Transverse colon (tissue), 4 donors: ENCODE measurements at regions of chr4 and their contacts with region 1.

Region 1: GRCh38 chr4:122758033-122758432 is 25.5 kb downstream of the BBS12 start:
- DNase-seq: peak; percentile 29
- H3K4me3 ChIP-seq: no peak overlapping the region
- H3K27ac ChIP-seq: peak overlapping the region in 3 of 4 donors; percentile 32 to 51 (median 33)
- H3K4me1 ChIP-seq: peaks cover 0 to 15% (median 5%) of the 10 kb centered on the region in 4 donors
- H3K27me3 ChIP-seq: no peaks in the 10 kb centered on the region
- CTCF ChIP-seq: peak; percentile 75 to 79 (median 76)
- EP300 ChIP-seq: no peak
- POLR2A ChIP-seq: no peak

Region 2: GRCh38 chr4:122803788-122804208 is 45.8 kb after region 1 on chr4:
- in situ Hi-C with region 1: no loop called
- intact Hi-C with region 1: no loop called
- DNase-seq: no peak
- H3K4me3 ChIP-seq: no peak overlapping the region
- H3K27ac ChIP-seq: no peak overlapping the region
- H3K4me1 ChIP-seq: peaks cover 0 to 2% (median 0%) of the 10 kb centered on the region in 4 donors
- H3K27me3 ChIP-seq: no peaks in the 10 kb centered on the region
- CTCF ChIP-seq: no peak
- EP300 ChIP-seq: no peak
- POLR2A ChIP-seq: no peak

Region 3: DNA sequence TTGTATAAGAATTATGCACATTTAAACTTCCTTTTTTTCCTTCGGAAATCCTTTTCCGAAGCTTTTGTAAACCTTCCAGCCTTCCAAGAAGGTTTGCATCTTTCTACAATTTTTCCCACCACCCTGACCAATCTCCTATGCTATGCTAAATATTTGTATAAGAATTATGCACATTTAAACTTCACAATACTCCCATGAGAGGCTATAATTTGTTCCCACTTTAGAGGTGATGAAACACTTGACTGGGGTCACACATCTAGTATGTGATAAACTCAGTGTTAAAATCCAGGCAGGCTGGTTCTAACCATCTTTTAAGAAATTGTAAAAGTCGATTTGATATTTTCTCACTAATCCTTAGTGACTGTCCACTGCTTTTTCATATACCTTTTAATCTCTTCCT is 142.3 kb after region 1 on chr4:
- in situ Hi-C with region 1: loop called in 2 of 4 experiments (anchors 10 to 25 kb)
- intact Hi-C with region 1: no loop called
- DNase-seq: no peak
- H3K4me3 ChIP-seq: no peak overlapping the region
- H3K27ac ChIP-seq: no peak overlapping the region
- H3K4me1 ChIP-seq: peaks cover 0 to 9% (median 2%) of the 10 kb centered on the region in 4 donors
- H3K27me3 ChIP-seq: no peaks in the 10 kb centered on the region
- CTCF ChIP-seq: no peak
- EP300 ChIP-seq: no peak
- POLR2A ChIP-seq: no peak

Region 4: GRCh38 chr4:122914938-122915337 is 156.9 kb after region 1 on chr4:
- in situ Hi-C with region 1: loop called (anchors 10 to 25 kb)
- intact Hi-C with region 1: loop called (anchors 5 kb)
- DNase-seq: no peak
- H3K4me3 ChIP-seq: no peak overlapping the region
- H3K27ac ChIP-seq: no peak overlapping the region
- H3K4me1 ChIP-seq: no peaks in the 10 kb centered on the region
- H3K27me3 ChIP-seq: no peaks in the 10 kb centered on the region
- CTCF ChIP-seq: no peak
- EP300 ChIP-seq: no peak
- POLR2A ChIP-seq: no peak

Region 5: DNA sequence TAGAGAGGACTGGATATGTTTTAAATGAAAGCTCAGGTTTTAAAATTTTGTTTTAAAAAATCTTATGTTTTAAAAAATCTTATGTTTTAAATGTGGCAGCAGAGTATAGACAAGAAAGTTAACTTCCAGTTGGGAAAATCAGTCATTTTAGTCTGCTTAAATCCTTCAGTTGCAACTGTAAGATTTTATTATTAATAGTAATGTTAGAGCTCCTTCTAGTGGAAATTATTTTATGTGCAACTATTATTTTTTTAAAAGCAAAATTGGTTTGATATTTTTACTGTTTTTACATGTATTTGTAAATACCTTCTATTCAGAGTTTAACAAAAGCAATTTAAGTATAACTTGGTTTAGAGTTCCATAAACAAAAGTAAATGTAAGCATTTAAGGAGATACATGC is 172.8 kb after region 1 on chr4:
- in situ Hi-C with region 1: loop called in 3 of 4 experiments (anchors 10 kb)
- intact Hi-C with region 1: loop called (anchors 5 kb)
- DNase-seq: no peak
- H3K4me3 ChIP-seq: no peak overlapping the region
- H3K27ac ChIP-seq: no peak overlapping the region
- H3K4me1 ChIP-seq: no peaks in the 10 kb centered on the region
- H3K27me3 ChIP-seq: no peaks in the 10 kb centered on the region
- CTCF ChIP-seq: peak; percentile 45 to 65 (median 58)
- EP300 ChIP-seq: no peak
- POLR2A ChIP-seq: no peak